ENCODE measurements at regions of chr12 and their contacts with region 1.

Region 1: DNA sequence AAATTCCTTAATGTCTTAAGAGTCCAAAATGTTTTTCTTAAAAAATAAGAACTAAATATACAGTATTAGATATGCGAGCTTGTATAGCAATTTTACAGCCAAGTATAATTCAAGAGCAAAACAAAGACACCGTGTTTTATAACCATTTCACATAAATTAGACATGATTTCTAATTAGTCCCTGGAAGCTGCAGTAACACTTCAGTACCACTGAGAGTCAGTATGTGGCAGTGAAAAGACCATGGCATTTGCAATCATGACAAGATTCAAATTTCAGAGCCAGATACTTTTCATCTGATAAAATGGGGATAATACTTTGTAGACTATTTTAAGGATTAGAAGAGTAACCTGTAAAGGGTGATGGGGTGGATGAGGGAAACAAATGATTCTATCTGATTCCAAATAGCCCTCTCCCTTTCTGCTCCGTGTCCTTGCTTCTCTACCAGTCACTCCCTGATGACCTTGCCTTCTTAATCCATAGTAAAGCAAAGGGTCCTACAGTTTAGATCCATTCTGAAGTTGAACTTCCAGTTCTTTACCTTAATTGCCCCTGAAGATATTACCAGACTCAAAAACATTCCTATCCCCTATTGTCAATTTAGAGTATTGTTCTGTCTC is 145.4 kb upstream of the ABCD2 start:
- DNase-seq: peak; percentile 47
- H3K4me3 Mint-ChIP-seq: no peak overlapping the region
- H3K27ac Mint-ChIP-seq: no peak overlapping the region
- H3K4me1 Mint-ChIP-seq: no peaks in the 10 kb centered on the region
- H3K27me3 Mint-ChIP-seq: no peaks in the 10 kb centered on the region
- CTCF ChIP-seq: peak; percentile 85

Region 2: DNA sequence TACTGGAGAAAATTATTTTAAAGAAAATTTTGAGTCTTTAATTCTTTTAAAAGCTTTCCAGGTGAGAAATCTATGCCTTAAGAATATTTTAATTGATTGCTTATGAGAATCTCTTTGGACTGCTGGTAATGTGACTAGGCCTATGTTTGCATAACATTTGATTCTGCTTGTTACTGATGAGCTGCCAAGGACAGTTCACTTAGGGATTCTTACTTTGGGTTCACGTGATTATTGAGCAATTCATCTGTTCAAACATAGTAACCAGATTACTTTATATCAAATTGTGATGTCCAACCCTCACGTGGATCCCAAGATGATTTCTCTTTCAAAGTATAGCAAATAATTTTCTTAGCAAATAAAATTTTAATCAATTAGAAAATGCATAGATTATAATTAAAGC is 118.1 kb before region 1 on chr12:
- CTCF ChIA-PET with region 1: no interaction called
- POLR2A ChIA-PET with region 1: no interaction called
- intact Hi-C with region 1: no loop called
- DNase-seq: peak; percentile 36
- H3K4me3 Mint-ChIP-seq: no peak overlapping the region
- H3K27ac Mint-ChIP-seq: no peak overlapping the region
- H3K4me1 Mint-ChIP-seq: no peaks in the 10 kb centered on the region
- H3K27me3 Mint-ChIP-seq: no peaks in the 10 kb centered on the region
- CTCF ChIP-seq: no peak

Region 3: DNA sequence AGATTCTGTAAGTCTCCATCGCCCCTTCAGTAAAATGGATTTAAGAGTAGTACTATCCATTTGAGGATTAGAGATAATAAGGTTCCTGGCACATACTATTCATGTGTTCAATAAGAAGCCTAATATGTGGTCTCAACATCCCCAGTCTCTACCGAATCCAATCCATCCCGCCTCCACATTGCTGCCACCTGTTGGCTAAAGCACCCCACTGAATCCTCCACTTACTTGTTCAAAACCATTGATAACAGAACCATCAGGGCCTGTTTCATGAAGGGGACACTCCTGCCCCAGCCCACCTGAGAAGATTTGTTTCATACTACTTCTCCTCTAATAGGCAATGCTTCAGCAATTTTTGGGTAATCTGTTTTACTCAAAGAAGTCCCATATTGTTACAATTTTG is 193.3 kb after region 1 on chr12:
- CTCF ChIA-PET with region 1: interaction called, 4 read pairs
- POLR2A ChIA-PET with region 1: no interaction called
- intact Hi-C with region 1: loop called (anchors 1 kb)
- DNase-seq: no peak
- H3K4me3 Mint-ChIP-seq: no peak overlapping the region
- H3K27ac Mint-ChIP-seq: no peak overlapping the region
- H3K4me1 Mint-ChIP-seq: no peaks in the 10 kb centered on the region
- H3K27me3 Mint-ChIP-seq: no peaks in the 10 kb centered on the region
- CTCF ChIP-seq: no peak

Region 4: GRCh38 chr12:39990122-39991101 is 225.4 kb after region 1 on chr12:
- CTCF ChIA-PET with region 1: interaction called, 21 read pairs
- POLR2A ChIA-PET with region 1: no interaction called
- intact Hi-C with region 1: loop called (anchors 2 kb)
- DNase-seq: peak; percentile 66
- H3K4me3 Mint-ChIP-seq: no peak overlapping the region
- H3K27ac Mint-ChIP-seq: no peak overlapping the region
- H3K4me1 Mint-ChIP-seq: no peaks in the 10 kb centered on the region
- H3K27me3 Mint-ChIP-seq: no peaks in the 10 kb centered on the region
- CTCF ChIP-seq: peak; percentile 71

Region 5: GRCh38 chr12:40016980-40017379 is 251.9 kb after region 1 on chr12:
- CTCF ChIA-PET with region 1: no interaction called
- POLR2A ChIA-PET with region 1: no interaction called
- intact Hi-C with region 1: no loop called
- DNase-seq: no peak
- H3K4me3 Mint-ChIP-seq: no peak overlapping the region
- H3K27ac Mint-ChIP-seq: no peak overlapping the region
- H3K4me1 Mint-ChIP-seq: peaks cover 10% of the 10 kb centered on the region
- H3K27me3 Mint-ChIP-seq: no peaks in the 10 kb centered on the region
- CTCF ChIP-seq: no peak